Panc1 (cell line): ENCODE measurements at regions of chr6 and their contacts with region 1.

Region 1: GRCh38 chr6:65638047-65638842 is 68.8 kb downstream of the EYS start:
- DNase-seq: no peak
- ATAC-seq: no peak; the same call in 1 of the 2 replicates
- H3K4me3 ChIP-seq: no peak overlapping the region
- H3K27ac ChIP-seq: no peak overlapping the region
- H3K4me1 ChIP-seq: no peaks in the 10 kb centered on the region
- H3K27me3 ChIP-seq: no peaks in the 10 kb centered on the region
- CTCF ChIP-seq: peak; percentile 50

Region 2: GRCh38 chr6:66199171-66199570 is 560.9 kb after region 1 on chr6:
- CTCF ChIA-PET with region 1: interaction called, 12 read pairs
- POLR2A ChIA-PET with region 1: no interaction called
- in situ Hi-C with region 1: no loop called
- intact Hi-C with region 1: no loop called
- DNase-seq: no peak
- ATAC-seq: no peak
- H3K4me3 ChIP-seq: no peak overlapping the region
- H3K27ac ChIP-seq: no peak overlapping the region
- H3K4me1 ChIP-seq: no peaks in the 10 kb centered on the region
- H3K27me3 ChIP-seq: no peaks in the 10 kb centered on the region
- CTCF ChIP-seq: no peak